GM12878 (cell line): ENCODE measurements at regions of chr1 and their contacts with region 1.

Region 1: DNA sequence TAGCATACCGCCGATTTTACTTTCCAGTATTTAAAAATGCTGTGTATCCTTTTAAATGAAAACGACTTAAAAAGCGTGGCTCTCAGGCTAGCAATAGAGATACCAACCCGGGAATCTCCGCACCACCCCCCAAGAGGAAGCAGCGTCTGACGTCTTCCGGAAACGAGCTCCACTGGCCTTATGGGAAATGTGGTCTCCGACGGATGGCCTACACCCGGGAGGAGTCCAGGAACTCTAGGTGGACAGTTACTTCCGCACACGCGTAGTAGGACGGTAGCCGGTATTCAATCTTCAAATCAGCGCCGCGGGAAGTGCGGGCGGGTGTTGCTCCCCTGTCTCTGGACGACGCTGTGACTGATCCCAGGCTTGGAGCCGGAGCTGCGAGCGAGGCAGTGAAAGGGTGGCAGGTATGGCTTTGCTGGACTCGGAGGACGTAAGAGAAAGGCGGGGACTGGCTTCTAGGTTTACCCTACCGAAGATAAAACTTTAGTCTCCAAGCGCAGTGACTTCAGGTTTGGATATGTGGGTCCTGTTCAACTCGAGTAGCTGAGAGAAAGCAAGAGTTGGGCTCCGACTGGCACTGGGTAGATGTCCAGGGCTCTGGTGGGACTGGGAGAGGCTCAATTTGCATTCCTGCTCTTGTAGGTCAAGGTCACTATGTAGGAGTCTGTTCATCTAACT is at the start of gene ZNF684:
- DNase-seq: peak; percentile 89
- ATAC-seq: peak; percentile 97
- H3K4me3 ChIP-seq: peak within 1 kb of the TSS; percentile 71
- H3K27ac ChIP-seq: peak within 1 kb of the TSS; percentile 77
- H3K4me1 ChIP-seq: peaks cover 6% of the 10 kb centered on the region
- H3K27me3 ChIP-seq: no peaks in the 10 kb centered on the region
- CTCF ChIP-seq: no peak
- EP300 ChIP-seq: no peak
- POLR2A ChIP-seq: peak; percentile 80
- RAD21 ChIP-seq: no peak
- polyA plus RNA-seq, gene ZNF684: 5.9 to 6.2 TPM

Region 2: DNA sequence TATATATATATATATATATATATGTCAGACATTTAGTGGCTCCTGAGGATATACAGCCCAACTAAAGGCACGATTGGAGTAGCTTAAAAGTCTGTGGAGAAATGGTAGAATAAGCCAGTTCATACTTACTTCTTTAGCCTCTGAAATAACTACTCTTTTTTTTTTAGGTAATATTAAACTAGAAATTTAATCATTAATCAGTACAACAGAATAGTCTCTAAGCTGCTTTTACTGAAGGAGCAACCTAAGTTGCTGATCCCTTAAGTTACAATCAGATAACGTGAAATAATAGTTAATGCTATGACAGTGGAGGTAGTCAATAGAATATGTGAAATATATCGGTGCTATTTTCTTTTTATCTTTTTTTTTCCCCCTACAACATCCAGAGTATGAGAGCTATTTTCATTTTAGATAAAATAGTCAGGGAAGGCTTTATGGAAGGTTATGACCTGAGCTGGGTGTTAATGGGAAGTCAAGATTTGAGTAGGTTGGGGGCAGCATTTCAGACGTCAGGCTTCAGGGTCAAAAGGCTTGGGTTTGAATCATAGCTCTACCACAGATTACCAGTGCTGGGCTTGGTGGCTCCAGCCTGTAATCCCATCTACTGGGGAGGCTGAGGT is 257.9 kb before region 1 on chr1:
- CTCF ChIA-PET with region 1: no interaction called
- POLR2A ChIA-PET with region 1: no interaction called
- RAD21 ChIA-PET with region 1: no interaction called
- SMC1A ChIA-PET with region 1: no interaction called
- in situ Hi-C with region 1: no loop called
- intact Hi-C with region 1: no loop called
- DNase-seq: no peak
- ATAC-seq: no peak
- H3K4me3 ChIP-seq: no peak overlapping the region
- H3K27ac ChIP-seq: no peak overlapping the region
- H3K4me1 ChIP-seq: peaks cover 5% of the 10 kb centered on the region; the same call in 1 of the 2 replicates
- H3K27me3 ChIP-seq: no peaks in the 10 kb centered on the region
- CTCF ChIP-seq: no peak
- EP300 ChIP-seq: no peak
- POLR2A ChIP-seq: no peak
- RAD21 ChIP-seq: no peak

Region 3: GRCh38 chr1:40352126-40352525 is 179.4 kb before region 1 on chr1:
- CTCF ChIA-PET with region 1: interaction called, 11 read pairs
- POLR2A ChIA-PET with region 1: no interaction called
- RAD21 ChIA-PET with region 1: no interaction called
- SMC1A ChIA-PET with region 1: no interaction called
- in situ Hi-C with region 1: no loop called
- intact Hi-C with region 1: no loop called
- DNase-seq: no peak
- ATAC-seq: peak; percentile 94
- H3K4me3 ChIP-seq: no peak overlapping the region
- H3K27ac ChIP-seq: no peak overlapping the region; the same call in 1 of the 2 replicates
- H3K4me1 ChIP-seq: peaks cover 13% of the 10 kb centered on the region
- H3K27me3 ChIP-seq: no peaks in the 10 kb centered on the region
- CTCF ChIP-seq: no peak
- EP300 ChIP-seq: no peak
- POLR2A ChIP-seq: no peak
- RAD21 ChIP-seq: no peak

Region 4: DNA sequence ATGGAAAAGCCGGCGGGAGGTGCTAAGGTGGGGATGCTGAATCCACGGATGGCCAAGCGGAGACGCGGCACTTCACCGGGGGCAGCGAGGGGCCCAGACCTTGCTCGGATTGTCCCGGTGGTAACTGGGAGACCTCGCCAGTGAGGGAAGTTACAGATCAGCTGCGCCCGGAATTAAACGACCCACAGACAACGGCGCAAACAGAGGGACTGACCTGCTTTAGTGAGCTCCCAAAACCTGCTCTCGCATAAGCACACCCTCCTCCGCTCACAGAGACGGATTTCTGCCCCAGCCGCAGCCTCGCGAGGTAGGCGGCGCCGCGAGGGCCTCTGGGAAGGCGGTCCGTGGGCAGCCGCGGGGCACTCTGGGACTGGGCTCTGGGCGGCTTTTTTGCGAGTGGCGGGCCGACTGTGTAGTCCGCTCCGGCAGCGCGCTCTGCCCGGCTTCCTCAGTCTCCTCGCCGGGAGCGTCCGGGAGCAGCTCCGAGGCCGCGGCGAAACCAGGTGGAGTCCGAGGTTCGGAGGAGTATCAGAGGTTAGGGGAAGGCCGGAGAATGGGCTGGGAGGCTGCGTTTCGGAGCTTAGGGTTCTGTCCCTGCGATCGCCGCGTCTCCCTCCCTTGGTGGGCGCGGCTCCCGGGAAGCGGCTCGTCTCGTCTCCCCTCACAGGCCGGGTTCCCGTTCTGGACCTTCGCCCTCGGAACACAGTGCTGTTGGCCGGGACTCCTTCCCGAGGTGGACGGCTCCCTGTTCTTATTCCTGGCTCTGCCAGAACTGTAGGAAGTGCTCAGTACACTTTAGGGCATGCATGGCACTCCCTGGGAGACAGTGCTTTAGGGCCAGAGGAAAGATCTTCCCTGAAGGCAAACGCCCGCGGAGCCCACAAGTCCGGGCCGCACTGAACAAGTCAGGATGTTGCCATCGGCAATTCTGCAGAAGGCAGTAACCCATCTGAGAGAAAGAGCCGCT is 22.9 kb before region 1 on chr1 and contains the start of gene EXO5:
- CTCF ChIA-PET with region 1: interaction called, 22 read pairs
- POLR2A ChIA-PET with region 1: interaction called, 5 read pairs
- RAD21 ChIA-PET with region 1: interaction called, 5 read pairs
- SMC1A ChIA-PET with region 1: interaction called, 6 read pairs
- in situ Hi-C with region 1: no loop called
- intact Hi-C with region 1: no loop called
- DNase-seq: peak; percentile 47
- ATAC-seq: peak; percentile 100
- H3K4me3 ChIP-seq: peak within 1 kb of the TSS; percentile 84
- H3K27ac ChIP-seq: peak within 1 kb of the TSS; percentile 57
- H3K4me1 ChIP-seq: no peaks in the 10 kb centered on the region; the same call in none of the 2 replicates
- H3K27me3 ChIP-seq: no peaks in the 10 kb centered on the region
- CTCF ChIP-seq: no peak
- EP300 ChIP-seq: no peak
- POLR2A ChIP-seq: peak; percentile 90
- RAD21 ChIP-seq: no peak
- polyA plus RNA-seq, gene EXO5: 2.1 to 3.7 TPM

Region 5: DNA sequence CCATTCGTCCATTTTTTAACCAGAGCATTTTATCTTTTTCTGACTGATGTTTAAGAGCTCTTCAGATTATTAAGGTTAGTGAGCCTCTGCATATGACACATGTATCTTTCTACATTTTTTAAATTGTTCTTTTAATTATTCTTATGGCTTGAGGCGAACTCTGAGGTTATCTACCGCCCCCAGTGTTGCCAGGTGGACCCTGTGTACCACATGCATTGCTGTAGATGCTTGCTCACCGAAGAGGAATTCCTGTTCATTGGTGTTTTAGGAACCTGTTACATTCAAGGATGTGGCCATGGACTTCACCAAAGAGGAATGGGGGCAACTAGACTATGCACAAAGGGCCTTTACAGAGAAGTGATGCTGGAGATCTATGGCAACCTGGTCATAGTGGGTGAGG is 31.7 kb after region 1 on chr1:
- CTCF ChIA-PET with region 1: interaction called, 11 read pairs
- POLR2A ChIA-PET with region 1: no interaction called
- RAD21 ChIA-PET with region 1: no interaction called
- SMC1A ChIA-PET with region 1: interaction called, 3 read pairs
- in situ Hi-C with region 1: no loop called
- intact Hi-C with region 1: no loop called
- DNase-seq: no peak
- ATAC-seq: no peak
- H3K4me3 ChIP-seq: no peak overlapping the region
- H3K27ac ChIP-seq: no peak overlapping the region
- H3K4me1 ChIP-seq: no peaks in the 10 kb centered on the region
- H3K27me3 ChIP-seq: no peaks in the 10 kb centered on the region
- CTCF ChIP-seq: no peak
- EP300 ChIP-seq: no peak
- POLR2A ChIP-seq: no peak
- RAD21 ChIP-seq: no peak

Region 6: DNA sequence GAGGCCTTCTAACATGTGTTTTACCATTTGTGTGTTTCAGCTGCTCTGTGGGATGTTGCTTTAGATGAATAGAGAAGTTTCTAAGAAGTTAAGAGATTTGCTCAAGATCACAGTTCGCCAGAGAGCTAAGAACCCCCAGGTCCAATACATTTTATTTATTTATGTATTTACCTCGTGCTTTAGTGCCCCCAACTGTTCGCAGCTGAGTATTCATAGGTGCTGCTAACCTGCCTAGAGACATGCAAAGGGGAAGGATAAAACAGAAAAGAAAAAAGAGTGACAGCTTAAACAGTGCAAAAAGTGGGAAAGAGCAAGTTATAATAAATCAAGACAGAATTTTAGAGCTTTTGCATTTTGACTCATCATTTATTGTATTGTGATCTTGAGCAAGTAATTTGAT is 191.1 kb after region 1 on chr1:
- CTCF ChIA-PET with region 1: interaction called, 11 read pairs
- POLR2A ChIA-PET with region 1: no interaction called
- RAD21 ChIA-PET with region 1: interaction called, 4 read pairs
- SMC1A ChIA-PET with region 1: no interaction called
- in situ Hi-C with region 1: no loop called
- intact Hi-C with region 1: no loop called
- DNase-seq: no peak
- ATAC-seq: peak; percentile 39; the same call in 1 of the 3 replicates
- H3K4me3 ChIP-seq: no peak overlapping the region
- H3K27ac ChIP-seq: no peak overlapping the region
- H3K4me1 ChIP-seq: no peaks in the 10 kb centered on the region
- H3K27me3 ChIP-seq: no peaks in the 10 kb centered on the region
- CTCF ChIP-seq: peak in 2 of 3 experiments; percentile 12 to 32; a peak in 1 of 6 replicates
- EP300 ChIP-seq: no peak
- POLR2A ChIP-seq: no peak
- RAD21 ChIP-seq: peak; percentile 55